ENCODE measurements at regions of chr1 and their contacts with region 1.

Region 1: DNA sequence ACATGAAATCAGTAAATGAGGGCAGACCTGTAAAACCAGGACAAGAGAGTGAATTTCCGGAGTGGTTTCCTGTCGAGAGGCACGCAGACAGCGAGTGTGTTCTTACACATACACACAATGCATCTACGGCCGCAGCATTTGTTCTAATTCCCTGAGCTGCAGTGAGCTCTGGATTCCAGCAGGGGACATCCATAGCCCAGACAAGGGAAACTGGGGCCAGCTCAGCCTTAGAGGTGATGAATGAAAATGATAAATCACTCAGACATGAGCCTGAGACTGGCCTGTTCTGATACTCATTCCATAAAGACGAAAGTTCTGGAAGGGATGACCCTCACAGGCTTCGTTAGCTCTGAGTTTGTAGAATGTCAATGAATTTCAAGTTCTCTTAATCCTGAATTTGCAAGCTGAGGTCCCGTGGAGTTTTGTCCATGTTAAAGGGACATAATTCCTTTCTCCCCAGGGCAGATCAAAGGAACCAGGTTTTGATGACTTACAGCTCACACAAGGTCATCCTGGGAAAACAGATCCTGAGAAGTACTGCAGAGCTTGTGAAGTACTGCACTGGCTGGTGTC is 207.9 kb upstream of the C1orf87 start:
- DNase-seq: peak; percentile 23 to 87 (median 74)
- H3K4me3 ChIP-seq: peak overlapping the region in 4 of 59 donors; percentile 9 to 37 (median 18)
- H3K27ac ChIP-seq: peak overlapping the region in 1 of 59 donors; percentile 26
- H3K27me3 ChIP-seq: no peaks in the 10 kb centered on the region
- CTCF ChIP-seq: peak; percentile 70 to 94 (median 88)

Region 2: GRCh38 chr1:60765204-60765603 is 483.8 kb after region 1 on chr1:
- intact Hi-C with region 1: loop called in 1 of 2 experiments (anchors 2 kb)
- DNase-seq: peak in 1 of 10 donors; percentile 16
- H3K4me3 ChIP-seq: no peak overlapping the region
- H3K27ac ChIP-seq: no peak overlapping the region
- H3K27me3 ChIP-seq: peaks cover 0 to 3% (median 0%) of the 10 kb centered on the region in 45 donors
- CTCF ChIP-seq: peak in 54 of 56 donors; percentile 14 to 75 (median 57)

Region 3: DNA sequence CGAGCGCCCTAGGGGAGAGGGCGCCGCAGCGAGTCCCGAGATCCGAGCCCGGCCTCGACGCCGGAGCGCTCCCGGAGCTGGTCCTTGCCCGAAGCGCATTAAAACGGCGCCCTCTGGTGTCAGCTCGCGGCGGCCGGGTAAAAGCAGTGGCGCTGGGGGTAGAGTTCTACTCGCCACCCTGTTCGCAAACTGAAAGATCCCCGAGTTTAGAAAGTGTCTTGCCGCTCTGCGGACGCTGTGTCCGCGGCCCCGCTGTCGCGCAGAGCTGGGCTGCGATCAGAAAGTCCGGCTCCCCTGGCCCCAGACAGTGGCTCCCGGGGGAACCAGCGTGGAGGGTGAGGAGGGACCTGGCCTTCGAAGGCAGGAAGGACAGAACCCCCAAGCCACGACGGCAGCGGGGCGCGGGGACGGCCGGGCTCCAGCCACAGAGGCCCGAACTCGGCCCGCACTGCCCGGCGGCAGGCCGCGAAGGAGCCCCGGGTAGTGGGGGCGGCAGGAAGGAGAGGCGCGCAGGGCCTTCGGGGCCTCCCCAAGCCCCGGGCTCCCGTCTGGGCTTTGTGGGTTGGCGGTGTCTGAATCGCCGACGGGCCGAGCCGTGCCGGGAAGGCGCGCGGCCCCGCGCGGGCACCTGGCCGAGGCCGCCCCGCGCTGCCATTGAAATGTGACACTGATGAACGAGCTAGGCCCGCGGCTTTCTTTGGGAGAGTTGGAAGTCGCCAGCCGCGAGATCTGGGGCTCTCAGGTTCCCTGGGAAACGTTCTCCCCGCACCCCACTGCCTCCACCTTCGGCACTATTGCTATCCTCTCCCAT is 761.8 kb after region 1 on chr1:
- intact Hi-C with region 1: loop called in 1 of 2 experiments (anchors 5 kb)
- DNase-seq: peak; percentile 71 to 86 (median 80)
- H3K4me3 ChIP-seq: peak overlapping the region; percentile 36 to 74 (median 58)
- H3K27ac ChIP-seq: peak overlapping the region in 46 of 59 donors; percentile 3 to 90 (median 64)
- H3K27me3 ChIP-seq: peaks cover 0 to 7% (median 0%) of the 10 kb centered on the region in 45 donors
- CTCF ChIP-seq: peak; percentile 66 to 96 (median 89)

Region 4: GRCh38 chr1:61851849-61852669 is 1570.6 kb after region 1 on chr1:
- intact Hi-C with region 1: loop called (anchors 10 kb)
- DNase-seq: no peak
- H3K4me3 ChIP-seq: no peak overlapping the region
- H3K27ac ChIP-seq: peak overlapping the region in 23 of 59 donors; percentile 3 to 69 (median 38)
- H3K27me3 ChIP-seq: no peaks in the 10 kb centered on the region
- CTCF ChIP-seq: peak; percentile 51 to 90 (median 74)

Measured in dorsolateral prefrontal cortex (tissue), 120 donors.